ENCODE measurements at regions of chr10 and their contacts with region 1.

Region 1: GRCh38 chr10:73940634-73941221 is 29.8 kb downstream of the PLAU start:
- DNase-seq: peak; percentile 89
- ATAC-seq: peak; percentile 100
- H3K4me3 Mint-ChIP-seq: peak overlapping the region; percentile 23
- H3K27ac Mint-ChIP-seq: peak overlapping the region; percentile 51
- H3K4me1 Mint-ChIP-seq: peaks cover 21% of the 10 kb centered on the region
- H3K27me3 Mint-ChIP-seq: peaks cover 18% of the 10 kb centered on the region

Region 2: GRCh38 chr10:73803680-73804286 is 136.9 kb before region 1 on chr10:
- CTCF ChIA-PET with region 1: no interaction called
- POLR2A ChIA-PET with region 1: no interaction called
- DNase-seq: no peak
- ATAC-seq: no peak
- H3K4me3 Mint-ChIP-seq: no peak overlapping the region
- H3K27ac Mint-ChIP-seq: peak overlapping the region; percentile 54
- H3K4me1 Mint-ChIP-seq: peaks cover 38% of the 10 kb centered on the region
- H3K27me3 Mint-ChIP-seq: no peaks in the 10 kb centered on the region

Region 3: GRCh38 chr10:73848821-73849489 is 91.8 kb before region 1 on chr10:
- CTCF ChIA-PET with region 1: interaction called, 25 read pairs
- POLR2A ChIA-PET with region 1: interaction called, 3 read pairs
- DNase-seq: peak; percentile 96
- ATAC-seq: peak; percentile 99
- H3K4me3 Mint-ChIP-seq: peak overlapping the region; percentile 22
- H3K27ac Mint-ChIP-seq: peak overlapping the region; percentile 55
- H3K4me1 Mint-ChIP-seq: peaks cover 24% of the 10 kb centered on the region
- H3K27me3 Mint-ChIP-seq: no peaks in the 10 kb centered on the region

Region 4: GRCh38 chr10:73899423-73899822 is 41.3 kb before region 1 on chr10:
- CTCF ChIA-PET with region 1: interaction called, 408 read pairs
- POLR2A ChIA-PET with region 1: no interaction called
- DNase-seq: no peak
- ATAC-seq: no peak
- H3K4me3 Mint-ChIP-seq: no peak overlapping the region
- H3K27ac Mint-ChIP-seq: no peak overlapping the region
- H3K4me1 Mint-ChIP-seq: peaks cover 14% of the 10 kb centered on the region
- H3K27me3 Mint-ChIP-seq: peaks cover 18% of the 10 kb centered on the region

Region 5: DNA sequence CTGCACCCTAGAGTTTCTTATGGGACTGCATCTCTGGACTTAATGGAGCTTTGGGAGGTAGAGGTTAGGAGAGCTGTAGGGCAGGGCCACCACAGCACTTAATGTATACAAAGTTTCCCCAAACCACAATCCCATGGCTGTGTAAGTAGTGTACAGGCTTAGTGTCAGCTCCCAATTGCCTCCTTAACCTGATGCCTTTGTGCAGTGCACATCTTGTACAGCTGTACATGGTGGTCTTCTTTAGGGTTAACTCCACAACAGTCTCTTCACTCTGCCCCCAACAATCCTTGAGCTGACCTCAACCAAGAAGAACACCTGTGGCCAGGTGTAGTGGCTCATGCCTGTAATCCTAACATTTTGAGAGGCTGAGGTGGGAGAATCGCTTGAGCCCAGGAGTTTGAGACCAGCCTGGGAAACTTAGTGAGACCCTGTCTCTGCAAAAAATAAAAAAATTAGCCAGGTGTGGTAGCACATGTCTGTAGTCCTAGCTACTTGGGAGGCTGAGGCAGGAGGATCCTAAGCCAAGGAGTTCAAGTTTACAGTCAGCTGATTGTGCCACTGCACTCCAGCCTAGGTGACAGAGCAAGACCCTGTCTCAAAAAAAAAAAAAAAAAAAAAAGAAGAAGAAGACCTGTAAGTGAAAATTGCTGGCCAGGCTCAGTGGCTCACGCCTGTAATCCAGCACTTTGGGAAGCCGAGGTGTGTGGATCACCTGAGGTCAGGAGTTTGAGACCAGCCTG is 23.0 kb before region 1 on chr10:
- CTCF ChIA-PET with region 1: interaction called, 10 read pairs
- POLR2A ChIA-PET with region 1: no interaction called
- DNase-seq: no peak
- ATAC-seq: no peak
- H3K4me3 Mint-ChIP-seq: no peak overlapping the region
- H3K27ac Mint-ChIP-seq: no peak overlapping the region
- H3K4me1 Mint-ChIP-seq: peaks cover 35% of the 10 kb centered on the region
- H3K27me3 Mint-ChIP-seq: peaks cover 24% of the 10 kb centered on the region

Region 6: GRCh38 chr10:73956476-73957359 is 16.0 kb after region 1 on chr10:
- CTCF ChIA-PET with region 1: interaction called, 32 read pairs
- POLR2A ChIA-PET with region 1: interaction called, 3 read pairs
- DNase-seq: peak; percentile 62
- ATAC-seq: peak; percentile 76
- H3K4me3 Mint-ChIP-seq: peak overlapping the region; percentile 60
- H3K27ac Mint-ChIP-seq: peak overlapping the region; percentile 89
- H3K4me1 Mint-ChIP-seq: peaks cover 53% of the 10 kb centered on the region
- H3K27me3 Mint-ChIP-seq: peaks cover 2% of the 10 kb centered on the region

Region 7: GRCh38 chr10:74081192-74081803 is 140.6 kb after region 1 on chr10:
- CTCF ChIA-PET with region 1: interaction called, 39 read pairs
- POLR2A ChIA-PET with region 1: no interaction called
- DNase-seq: peak; percentile 64
- ATAC-seq: no peak
- H3K4me3 Mint-ChIP-seq: no peak overlapping the region
- H3K27ac Mint-ChIP-seq: peak overlapping the region; percentile 17
- H3K4me1 Mint-ChIP-seq: peaks cover 41% of the 10 kb centered on the region
- H3K27me3 Mint-ChIP-seq: no peaks in the 10 kb centered on the region